Spleen (tissue), 13 donors: ENCODE measurements at regions of chr19 and their contacts with region 1.

Region 1: GRCh38 chr19:54674021-54674617 is 11.3 kb downstream of the LILRB4 start:
- DNase-seq: no peak
- H3K4me3 ChIP-seq: no peak overlapping the region
- H3K27ac ChIP-seq: no peak overlapping the region
- H3K4me1 ChIP-seq: peaks cover 0 to 14% (median 0%) of the 10 kb centered on the region in 6 donors
- H3K27me3 ChIP-seq: peaks cover 0 to 35% (median 0%) of the 10 kb centered on the region in 7 donors
- CTCF ChIP-seq: peak in 10 of 11 experiments; percentile 17 to 69 (median 58)
- POLR2A ChIP-seq: no peak

Region 2: GRCh38 chr19:54481322-54481930 is 192.7 kb before region 1 on chr19:
- intact Hi-C with region 1: loop called (anchors 5 kb)
- DNase-seq: no peak
- H3K4me3 ChIP-seq: no peak overlapping the region
- H3K27ac ChIP-seq: no peak overlapping the region
- H3K4me1 ChIP-seq: peaks cover 0 to 53% (median 29%) of the 10 kb centered on the region in 6 donors
- H3K27me3 ChIP-seq: peaks cover 0 to 83% (median 12%) of the 10 kb centered on the region in 7 donors
- CTCF ChIP-seq: peak in 10 of 11 experiments; percentile 20 to 75 (median 54)
- POLR2A ChIP-seq: no peak